MCF 10A (cell line): ENCODE measurements at regions of chr12 and their contacts with region 1.

Region 1: GRCh38 chr12:39359644-39360043 is 83.3 kb downstream of the KIF21A start:
- DNase-seq: no peak
- H3K4me3 Mint-ChIP-seq: no peak overlapping the region
- H3K27ac Mint-ChIP-seq: no peak overlapping the region
- H3K4me1 Mint-ChIP-seq: peaks cover 6% of the 10 kb centered on the region
- H3K27me3 Mint-ChIP-seq: no peaks in the 10 kb centered on the region
- CTCF ChIP-seq: no peak

Region 2: GRCh38 chr12:38761636-38762342 is 597.9 kb before region 1 on chr12:
- CTCF ChIA-PET with region 1: no interaction called
- POLR2A ChIA-PET with region 1: no interaction called
- intact Hi-C with region 1: no loop called
- DNase-seq: peak; percentile 72
- H3K4me3 Mint-ChIP-seq: no peak overlapping the region
- H3K27ac Mint-ChIP-seq: peak overlapping the region; percentile 6
- H3K4me1 Mint-ChIP-seq: peaks cover 9% of the 10 kb centered on the region
- H3K27me3 Mint-ChIP-seq: no peaks in the 10 kb centered on the region
- CTCF ChIP-seq: no peak

Region 3: GRCh38 chr12:39372929-39373328 is 13.3 kb after region 1 on chr12:
- CTCF ChIA-PET with region 1: interaction called, 3 read pairs
- POLR2A ChIA-PET with region 1: no interaction called
- intact Hi-C with region 1: loop called (anchors 1 kb)
- DNase-seq: peak; percentile 20
- H3K4me3 Mint-ChIP-seq: no peak overlapping the region
- H3K27ac Mint-ChIP-seq: peak overlapping the region; percentile 32
- H3K4me1 Mint-ChIP-seq: peaks cover 12% of the 10 kb centered on the region
- H3K27me3 Mint-ChIP-seq: no peaks in the 10 kb centered on the region
- CTCF ChIP-seq: no peak